ENCODE measurements at regions of chr11 and their contacts with region 1.

Region 1: DNA sequence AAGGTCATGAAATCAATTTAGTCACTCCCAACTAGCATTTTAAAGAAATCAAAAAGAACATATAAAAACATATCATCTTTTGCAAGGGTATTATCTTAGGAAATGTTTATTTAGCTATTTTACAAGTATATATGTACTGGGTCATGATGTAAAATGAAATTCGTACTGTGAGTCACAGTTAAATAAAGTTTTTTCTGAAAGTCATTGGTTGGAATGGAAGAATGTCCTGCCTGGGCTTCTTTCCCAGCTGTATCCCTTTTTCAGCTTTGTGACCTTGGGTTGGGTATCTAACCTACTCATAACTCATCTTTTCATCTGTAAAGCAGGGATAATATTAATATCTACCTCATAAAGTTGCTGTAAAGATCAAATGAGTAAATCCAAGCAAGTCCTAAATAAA is 15.7 kb downstream of the FDX1 start:
- DNase-seq: no peak
- H3K4me3 ChIP-seq: no peak overlapping the region
- H3K4me3 Mint-ChIP-seq: no peak overlapping the region
- H3K27ac ChIP-seq: no peak overlapping the region
- H3K27ac Mint-ChIP-seq: no peak overlapping the region
- H3K4me1 ChIP-seq: no peaks in the 10 kb centered on the region
- H3K4me1 Mint-ChIP-seq: peaks cover 29 to 51% (median 50%) of the 10 kb centered on the region in 3 donors
- H3K27me3 ChIP-seq: no peaks in the 10 kb centered on the region
- H3K27me3 Mint-ChIP-seq: no peaks in the 10 kb centered on the region

Region 2: DNA sequence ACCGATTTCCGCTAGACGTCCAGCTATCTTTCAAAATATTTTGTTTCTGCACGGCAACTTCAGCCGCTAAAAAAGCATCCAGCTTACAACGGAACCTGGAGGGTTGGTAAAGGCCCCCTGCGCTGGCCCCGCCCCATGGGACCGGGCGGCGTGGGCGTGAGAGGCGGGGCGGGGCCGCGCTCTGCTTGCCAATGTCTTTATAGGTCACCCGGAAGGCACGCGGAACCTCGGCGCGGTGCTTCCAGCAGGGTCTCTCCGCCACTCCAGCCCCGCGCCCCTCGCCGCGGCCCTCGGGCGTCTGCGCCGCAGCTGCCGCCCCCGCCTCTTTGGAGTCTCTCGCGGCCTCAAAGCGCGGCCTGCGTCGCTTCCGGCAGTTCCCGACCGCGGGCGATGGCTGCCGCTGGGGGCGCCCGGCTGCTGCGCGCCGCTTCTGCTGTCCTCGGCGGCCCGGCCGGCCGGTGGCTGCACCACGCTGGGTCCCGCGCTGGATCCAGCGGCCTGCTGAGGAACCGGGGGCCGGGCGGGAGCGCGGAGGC is 15.6 kb before region 1 on chr11 and contains the start of gene FDX1:
- CTCF ChIA-PET with region 1: interaction called, 17 read pairs
- POLR2A ChIA-PET with region 1: interaction called, 4 read pairs
- DNase-seq: peak; percentile 73 to 87 (median 81)
- H3K4me3 ChIP-seq: peak within 1 kb of the TSS; percentile 89
- H3K4me3 Mint-ChIP-seq: peak within 1 kb of the TSS; percentile 97 to 99 (median 98)
- H3K27ac ChIP-seq: peak within 1 kb of the TSS; percentile 74
- H3K27ac Mint-ChIP-seq: peak within 1 kb of the TSS; percentile 92 to 99 (median 98)
- H3K4me1 ChIP-seq: peaks cover 33% of the 10 kb centered on the region
- H3K4me1 Mint-ChIP-seq: peaks cover 44 to 51% (median 49%) of the 10 kb centered on the region in 3 donors
- H3K27me3 ChIP-seq: no peaks in the 10 kb centered on the region
- H3K27me3 Mint-ChIP-seq: no peaks in the 10 kb centered on the region
- total RNA-seq, gene FDX1: 13.8 to 14.4 TPM

Region 3: GRCh38 chr11:110497231-110497978 is 52.0 kb after region 1 on chr11:
- CTCF ChIA-PET with region 1: no interaction called
- POLR2A ChIA-PET with region 1: no interaction called
- DNase-seq: no peak
- H3K4me3 ChIP-seq: no peak overlapping the region
- H3K4me3 Mint-ChIP-seq: no peak overlapping the region
- H3K27ac ChIP-seq: no peak overlapping the region
- H3K27ac Mint-ChIP-seq: peak overlapping the region in 3 of 8 donors; percentile 21 to 51 (median 35)
- H3K4me1 ChIP-seq: no peaks in the 10 kb centered on the region
- H3K4me1 Mint-ChIP-seq: no peaks in the 10 kb centered on the region
- H3K27me3 ChIP-seq: no peaks in the 10 kb centered on the region
- H3K27me3 Mint-ChIP-seq: no peaks in the 10 kb centered on the region